ENCODE measurements at regions of chr6 and their contacts with region 1.

Region 1: GRCh38 chr6:152232501-152233151 is 404.5 kb downstream of the SYNE1 start:
- DNase-seq: peak in 5 of 9 donors; percentile 1 to 31 (median 21)
- ATAC-seq: peak; percentile 58
- H3K4me3 ChIP-seq: no peak overlapping the region
- H3K4me3 Mint-ChIP-seq: peak overlapping the region; percentile 55 to 84 (median 78)
- H3K27ac ChIP-seq: no peak overlapping the region
- H3K27ac Mint-ChIP-seq: peak overlapping the region; percentile 35 to 95 (median 86)
- H3K4me1 ChIP-seq: peaks cover 2 to 14% of the 10 kb centered on the region in 2 donors
- H3K4me1 Mint-ChIP-seq: peaks cover 10 to 33% (median 30%) of the 10 kb centered on the region in 7 donors
- H3K27me3 ChIP-seq: no peaks in the 10 kb centered on the region
- H3K27me3 Mint-ChIP-seq: no peaks in the 10 kb centered on the region

Region 2: GRCh38 chr6:152206072-152206818 is 26.4 kb before region 1 on chr6:
- CTCF ChIA-PET with region 1: interaction called, 3 read pairs
- POLR2A ChIA-PET with region 1: no interaction called
- intact Hi-C with region 1: loop called in 1 of 2 experiments (anchors 2 kb)
- DNase-seq: peak in 7 of 9 donors; percentile 15 to 50 (median 39)
- ATAC-seq: peak; percentile 45
- H3K4me3 ChIP-seq: no peak overlapping the region
- H3K4me3 Mint-ChIP-seq: no peak overlapping the region
- H3K27ac ChIP-seq: no peak overlapping the region
- H3K27ac Mint-ChIP-seq: peak overlapping the region in 5 of 9 donors; percentile 3 to 72 (median 14)
- H3K4me1 ChIP-seq: no peaks in the 10 kb centered on the region
- H3K4me1 Mint-ChIP-seq: peaks cover 0 to 12% (median 7%) of the 10 kb centered on the region in 7 donors
- H3K27me3 ChIP-seq: no peaks in the 10 kb centered on the region
- H3K27me3 Mint-ChIP-seq: no peaks in the 10 kb centered on the region